ENCODE measurements at regions of chr10 and their contacts with region 1.

Region 1: DNA sequence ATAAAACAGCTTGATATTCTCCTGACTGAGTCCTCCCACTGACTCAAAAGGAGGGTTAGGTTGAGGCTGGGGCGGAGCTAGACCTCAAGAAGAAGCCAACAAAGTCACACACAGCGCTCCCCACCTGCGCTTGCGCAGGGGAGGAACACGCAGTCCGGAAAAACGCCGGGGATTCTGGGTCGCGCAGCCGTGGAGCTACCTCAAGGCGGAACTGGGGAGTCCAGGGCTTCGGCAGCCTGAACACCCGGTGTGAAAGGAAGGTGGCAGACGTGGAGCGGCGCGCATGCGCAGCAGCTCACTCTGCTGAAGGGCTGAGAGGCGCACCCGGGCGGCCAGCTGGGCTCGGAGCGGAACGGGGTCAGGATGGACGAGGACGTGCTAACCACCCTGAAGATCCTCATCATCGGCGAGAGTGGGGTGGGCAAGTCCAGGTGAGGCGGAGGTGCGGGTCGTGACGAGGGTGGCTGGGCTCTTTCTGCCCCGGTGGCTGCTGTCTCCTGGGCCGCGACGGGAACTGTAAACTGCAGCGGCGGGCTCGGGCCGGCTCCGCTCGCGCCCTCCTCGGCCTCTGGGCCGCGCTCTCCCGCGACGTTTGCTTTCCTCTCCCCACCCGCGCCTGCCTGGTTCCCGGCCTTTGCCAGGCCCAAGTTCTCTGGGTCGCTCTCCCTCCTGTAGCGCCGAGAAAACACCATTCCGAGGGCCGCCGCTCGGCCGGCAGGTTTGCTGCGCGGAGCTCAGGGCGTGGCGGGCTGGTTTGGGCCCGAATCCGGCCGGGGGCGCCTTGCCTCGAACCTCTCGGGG is at the start of gene RAB18:
- DNase-seq: peak; percentile 95 to 100 (median 98)
- ATAC-seq: peak; percentile 95
- H3K4me3 ChIP-seq: peak within 1 kb of the TSS; percentile 74
- H3K4me3 Mint-ChIP-seq: peak within 1 kb of the TSS; percentile 99
- H3K27ac ChIP-seq: peak within 1 kb of the TSS; percentile 68 to 76
- H3K27ac Mint-ChIP-seq: peak within 1 kb of the TSS; percentile 97
- H3K4me1 ChIP-seq: peaks cover 31% of the 10 kb centered on the region
- H3K4me1 Mint-ChIP-seq: peaks cover 60% of the 10 kb centered on the region
- H3K27me3 ChIP-seq: no peaks in the 10 kb centered on the region
- H3K27me3 Mint-ChIP-seq: no peaks in the 10 kb centered on the region
- CTCF ChIP-seq: no peak
- total RNA-seq, gene RAB18: 120 to 130 TPM

Region 2: DNA sequence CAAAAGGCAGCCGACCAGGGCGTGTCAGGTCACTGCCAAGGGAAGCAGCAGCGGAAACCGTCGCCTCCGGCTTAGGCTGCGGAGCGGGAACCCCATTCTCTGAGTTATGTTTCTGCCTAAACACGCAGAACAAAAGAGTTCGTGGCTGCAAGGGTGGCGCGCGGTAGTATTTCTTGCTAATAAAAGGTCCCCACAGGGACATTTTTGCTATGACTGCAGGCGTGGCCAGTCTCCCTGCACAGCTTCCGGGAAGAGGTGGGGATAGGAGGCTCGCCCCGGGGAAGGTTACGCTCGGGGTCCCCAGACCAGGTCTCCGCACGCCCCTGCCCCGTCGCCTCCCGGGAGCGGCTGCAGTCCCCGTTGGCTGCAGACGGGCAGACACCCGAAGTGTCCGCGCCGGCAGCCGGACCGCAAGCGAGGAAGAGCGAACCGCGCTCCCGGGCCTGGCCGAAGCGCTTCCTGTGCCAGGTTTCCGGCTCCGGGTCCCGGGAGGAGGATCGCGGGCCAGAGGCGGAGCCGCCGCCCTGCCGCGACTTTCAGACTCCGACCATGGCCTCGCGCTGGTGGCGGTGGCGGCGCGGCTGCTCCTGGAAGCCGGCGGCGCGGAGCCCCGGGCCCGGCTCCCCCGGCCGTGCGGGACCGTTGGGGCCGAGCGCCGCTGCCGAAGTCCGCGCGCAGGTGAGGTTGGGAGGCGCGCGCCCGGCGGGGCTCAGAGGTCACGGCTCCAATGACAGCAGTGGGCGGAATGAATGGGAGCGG is 806.9 kb before region 1 on chr10 and contains the start of gene PDSS1:
- CTCF ChIA-PET with region 1: no interaction called
- POLR2A ChIA-PET with region 1: interaction called, 3 read pairs
- intact Hi-C with region 1: loop called in 1 of 2 experiments (anchors 10 kb)
- DNase-seq: peak; percentile 29 to 77 (median 52)
- ATAC-seq: peak; percentile 65
- H3K4me3 ChIP-seq: peak within 1 kb of the TSS; percentile 69
- H3K4me3 Mint-ChIP-seq: peak within 1 kb of the TSS; percentile 96
- H3K27ac ChIP-seq: peak within 1 kb of the TSS; percentile 53 to 75
- H3K27ac Mint-ChIP-seq: peak within 1 kb of the TSS; percentile 92
- H3K4me1 ChIP-seq: peaks cover 18% of the 10 kb centered on the region
- H3K4me1 Mint-ChIP-seq: peaks cover 38% of the 10 kb centered on the region
- H3K27me3 ChIP-seq: no peaks in the 10 kb centered on the region
- H3K27me3 Mint-ChIP-seq: no peaks in the 10 kb centered on the region
- CTCF ChIP-seq: no peak
- total RNA-seq, gene PDSS1: 3.8 to 4.5 TPM

Region 3: GRCh38 chr10:27143686-27144085 is 360.5 kb before region 1 on chr10:
- CTCF ChIA-PET with region 1: no interaction called
- POLR2A ChIA-PET with region 1: no interaction called
- intact Hi-C with region 1: loop called in 1 of 2 experiments (anchors 5 kb)
- DNase-seq: no peak
- ATAC-seq: no peak
- H3K4me3 ChIP-seq: no peak overlapping the region
- H3K4me3 Mint-ChIP-seq: no peak overlapping the region
- H3K27ac ChIP-seq: no peak overlapping the region
- H3K27ac Mint-ChIP-seq: no peak overlapping the region
- H3K4me1 ChIP-seq: peaks cover 3% of the 10 kb centered on the region
- H3K4me1 Mint-ChIP-seq: peaks cover 24% of the 10 kb centered on the region
- H3K27me3 ChIP-seq: no peaks in the 10 kb centered on the region
- H3K27me3 Mint-ChIP-seq: no peaks in the 10 kb centered on the region
- CTCF ChIP-seq: no peak

Region 4: GRCh38 chr10:27252267-27253000 is 251.8 kb before region 1 on chr10:
- CTCF ChIA-PET with region 1: no interaction called
- POLR2A ChIA-PET with region 1: interaction called, 6 read pairs
- intact Hi-C with region 1: loop called (anchors 2 to 10 kb)
- DNase-seq: peak; percentile 63 to 86 (median 78)
- ATAC-seq: peak; percentile 92
- H3K4me3 ChIP-seq: peak overlapping the region; percentile 58
- H3K4me3 Mint-ChIP-seq: peak overlapping the region; percentile 90
- H3K27ac ChIP-seq: peak overlapping the region in 1 of 2 donors; percentile 46
- H3K27ac Mint-ChIP-seq: peak overlapping the region; percentile 83
- H3K4me1 ChIP-seq: peaks cover 12% of the 10 kb centered on the region
- H3K4me1 Mint-ChIP-seq: peaks cover 11% of the 10 kb centered on the region
- H3K27me3 ChIP-seq: peaks cover 0 to under 1% of the 10 kb centered on the region in 2 experiments
- H3K27me3 Mint-ChIP-seq: peaks cover 6% of the 10 kb centered on the region
- CTCF ChIP-seq: peak; percentile 87

Region 5: DNA sequence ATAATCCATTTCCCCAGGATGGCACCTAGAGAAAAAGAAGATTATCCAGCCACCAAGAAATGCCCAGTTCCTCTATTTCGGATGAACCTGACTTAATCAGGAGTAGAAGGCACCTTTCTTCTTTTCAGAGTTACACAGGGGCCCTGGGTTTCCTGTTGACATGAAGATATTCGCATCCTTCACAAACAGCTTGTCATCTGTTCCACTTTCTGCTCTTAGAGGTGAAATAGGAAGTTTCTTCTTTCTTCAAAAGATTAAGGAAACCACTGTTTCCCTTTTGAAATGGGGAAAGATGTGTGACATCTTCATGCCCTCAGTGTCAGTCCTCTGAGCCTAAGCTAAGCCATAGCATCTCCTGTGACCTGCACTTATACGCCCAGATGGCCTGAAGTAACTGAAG is 39.2 kb before region 1 on chr10:
- CTCF ChIA-PET with region 1: no interaction called
- POLR2A ChIA-PET with region 1: interaction called, 24 read pairs
- intact Hi-C with region 1: loop called in 1 of 2 experiments (anchors 2 kb)
- DNase-seq: peak in 4 of 14 experiments; percentile 13 to 79 (median 40)
- ATAC-seq: peak; percentile 87
- H3K4me3 ChIP-seq: no peak overlapping the region
- H3K4me3 Mint-ChIP-seq: peak overlapping the region; percentile 76
- H3K27ac ChIP-seq: peak overlapping the region in 1 of 2 donors; percentile 70
- H3K27ac Mint-ChIP-seq: peak overlapping the region; percentile 88
- H3K4me1 ChIP-seq: peaks cover 28% of the 10 kb centered on the region
- H3K4me1 Mint-ChIP-seq: peaks cover 44% of the 10 kb centered on the region
- H3K27me3 ChIP-seq: no peaks in the 10 kb centered on the region
- H3K27me3 Mint-ChIP-seq: no peaks in the 10 kb centered on the region
- CTCF ChIP-seq: no peak

Region 6: DNA sequence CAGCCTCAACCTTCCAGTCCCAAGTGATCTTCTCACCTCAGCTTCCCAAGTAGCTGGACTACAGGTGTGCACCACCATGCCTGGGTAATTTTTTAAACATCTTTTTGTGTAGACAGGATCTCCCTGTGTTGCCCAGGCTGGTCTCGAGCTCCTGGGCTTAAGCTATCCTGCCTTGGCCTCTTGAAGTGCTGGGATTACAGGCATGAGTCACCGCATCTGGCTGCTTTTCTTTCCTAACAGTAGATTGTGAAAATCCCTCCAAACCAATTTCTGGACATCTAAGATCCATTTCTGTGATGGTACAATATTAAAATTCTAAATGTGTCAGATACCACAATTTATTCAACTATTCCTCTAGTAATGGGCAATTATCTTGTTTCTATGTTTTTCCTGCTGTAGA is 38.6 kb after region 1 on chr10:
- CTCF ChIA-PET with region 1: interaction called, 3 read pairs
- POLR2A ChIA-PET with region 1: interaction called, 19 read pairs
- intact Hi-C with region 1: no loop called
- DNase-seq: no peak
- ATAC-seq: no peak
- H3K4me3 ChIP-seq: no peak overlapping the region
- H3K4me3 Mint-ChIP-seq: no peak overlapping the region
- H3K27ac ChIP-seq: no peak overlapping the region
- H3K27ac Mint-ChIP-seq: peak overlapping the region; percentile 17
- H3K4me1 ChIP-seq: peaks cover 9% of the 10 kb centered on the region
- H3K4me1 Mint-ChIP-seq: peaks cover 36% of the 10 kb centered on the region
- H3K27me3 ChIP-seq: no peaks in the 10 kb centered on the region
- H3K27me3 Mint-ChIP-seq: no peaks in the 10 kb centered on the region
- CTCF ChIP-seq: no peak

Region 7: GRCh38 chr10:28334296-28334695 is 830.1 kb after region 1 on chr10:
- CTCF ChIA-PET with region 1: no interaction called
- POLR2A ChIA-PET with region 1: interaction called, 8 read pairs
- intact Hi-C with region 1: loop called in 1 of 2 experiments (anchors 10 kb)
- DNase-seq: peak in 8 of 14 experiments; percentile 17 to 97 (median 52)
- ATAC-seq: peak; percentile 68
- H3K4me3 ChIP-seq: peak overlapping the region; percentile 76
- H3K4me3 Mint-ChIP-seq: peak overlapping the region; percentile 90
- H3K27ac ChIP-seq: peak overlapping the region; percentile 97 to 99
- H3K27ac Mint-ChIP-seq: peak overlapping the region; percentile 98
- H3K4me1 ChIP-seq: peaks cover 64% of the 10 kb centered on the region
- H3K4me1 Mint-ChIP-seq: peaks cover 85% of the 10 kb centered on the region
- H3K27me3 ChIP-seq: no peaks in the 10 kb centered on the region
- H3K27me3 Mint-ChIP-seq: no peaks in the 10 kb centered on the region
- CTCF ChIP-seq: no peak